Right ventricle myocardium superior (tissue), 1 donor: ENCODE measurements at regions of chr14 and their contacts with region 1.

Region 1: DNA sequence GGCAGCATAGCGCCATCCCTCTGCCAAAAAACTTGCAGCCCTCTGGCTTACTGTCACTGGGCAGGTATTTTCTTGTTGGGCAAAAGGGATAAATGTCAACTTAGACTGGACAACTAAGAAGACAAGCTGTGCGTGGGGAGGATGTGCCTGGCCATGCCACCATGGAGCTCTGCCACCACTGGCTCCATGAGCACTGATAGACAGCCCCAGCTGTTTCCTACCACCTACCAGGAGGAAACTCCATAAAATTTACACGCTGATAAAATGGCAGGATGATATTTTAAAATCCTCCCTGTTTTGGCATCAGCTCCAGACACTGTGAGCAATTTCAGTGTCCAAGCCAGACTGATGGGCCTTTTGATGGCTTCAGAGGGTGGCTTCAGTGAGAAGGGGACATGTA is 7.1 kb upstream of the GALNT16 start:
- DNase-seq: no peak
- ATAC-seq: no peak

Region 2: GRCh38 chr14:69346710-69347109 is 93.9 kb after region 1 on chr14:
- intact Hi-C with region 1: loop called (anchors 5 kb)
- DNase-seq: peak; percentile 54
- ATAC-seq: no peak